ENCODE measurements at regions of chr7 and their contacts with region 1.

Region 1: DNA sequence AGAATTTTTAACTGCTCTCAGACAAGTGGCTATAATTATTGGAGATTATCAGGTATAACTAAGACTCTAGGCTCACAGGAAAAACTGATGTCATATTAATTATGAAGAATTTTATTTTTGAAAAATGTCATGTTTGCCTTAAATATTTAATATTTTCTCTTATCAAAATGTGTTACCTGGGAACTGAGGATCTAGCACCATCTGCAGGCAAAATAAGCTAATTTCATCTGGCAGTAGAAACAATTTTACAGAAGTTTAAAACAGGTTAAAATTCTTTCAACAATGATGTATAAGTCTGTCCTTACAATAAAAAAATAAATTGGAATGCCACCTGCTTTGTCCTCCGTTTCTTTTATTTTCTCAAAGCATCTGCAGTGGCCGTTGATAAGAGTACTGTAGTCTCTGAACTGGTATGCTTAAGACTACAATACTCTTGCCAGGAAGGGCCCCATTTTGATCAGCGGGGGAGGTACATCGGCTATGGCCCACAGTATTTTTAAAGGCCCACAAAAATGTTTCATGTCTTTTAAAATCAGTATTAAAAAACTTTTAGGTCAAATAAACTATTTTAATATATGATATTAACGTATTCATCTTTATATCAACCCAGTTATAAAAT is 81.3 kb downstream of the VWDE start:
- DNase-seq: no peak
- ATAC-seq: no peak
- H3K4me3 ChIP-seq: no peak overlapping the region
- H3K27ac ChIP-seq: no peak overlapping the region
- H3K4me1 ChIP-seq: no peaks in the 10 kb centered on the region
- H3K27me3 ChIP-seq: no peaks in the 10 kb centered on the region
- CTCF ChIP-seq: peak; percentile 69

Region 2: GRCh38 chr7:11420049-11420448 is 902.3 kb before region 1 on chr7:
- intact Hi-C with region 1: loop called in 1 of 2 experiments (anchors 5 kb)
- DNase-seq: no peak
- ATAC-seq: no peak
- H3K4me3 ChIP-seq: no peak overlapping the region
- H3K27ac ChIP-seq: no peak overlapping the region
- H3K4me1 ChIP-seq: no peaks in the 10 kb centered on the region
- H3K27me3 ChIP-seq: no peaks in the 10 kb centered on the region
- CTCF ChIP-seq: no peak

Region 3: DNA sequence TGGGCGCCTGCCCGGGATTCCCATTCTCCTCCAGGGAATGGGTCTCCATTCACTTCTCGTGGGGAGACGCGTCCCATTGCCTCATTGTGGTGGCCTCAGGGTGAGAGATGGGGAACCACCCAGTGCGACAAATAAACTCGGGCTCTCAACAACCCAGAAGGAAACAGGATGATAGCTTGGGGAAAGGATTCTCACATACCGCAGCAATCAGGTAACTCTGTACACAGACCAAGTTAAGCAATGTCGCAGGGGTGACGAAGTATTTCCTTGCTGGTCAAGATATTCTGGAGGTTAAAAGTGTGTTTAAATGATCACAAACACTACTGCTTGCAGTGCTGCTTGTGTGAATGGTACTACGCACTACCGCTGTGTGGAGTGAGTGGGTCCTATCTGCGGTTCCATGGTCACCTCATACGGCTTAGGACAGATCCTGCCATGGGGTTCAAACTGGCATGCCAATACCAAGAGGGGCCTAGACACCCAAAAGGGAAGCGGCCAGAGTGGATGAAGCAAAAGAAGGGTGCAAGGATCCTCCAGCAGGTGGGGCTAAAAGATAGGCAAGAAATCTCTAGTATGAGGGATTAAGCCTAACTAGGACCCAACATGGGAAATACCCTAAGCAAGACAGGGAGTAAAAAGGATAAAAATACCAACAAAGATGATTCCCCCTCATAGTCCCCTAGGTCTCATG is 255.1 kb before region 1 on chr7:
- intact Hi-C with region 1: loop called (anchors 5 kb)
- DNase-seq: no peak
- ATAC-seq: peak in 3 of 4 donors; percentile 45 to 54 (median 50)
- H3K4me3 ChIP-seq: no peak overlapping the region
- H3K27ac ChIP-seq: no peak overlapping the region
- H3K4me1 ChIP-seq: no peaks in the 10 kb centered on the region
- H3K27me3 ChIP-seq: no peaks in the 10 kb centered on the region
- CTCF ChIP-seq: peak; percentile 46

Region 4: DNA sequence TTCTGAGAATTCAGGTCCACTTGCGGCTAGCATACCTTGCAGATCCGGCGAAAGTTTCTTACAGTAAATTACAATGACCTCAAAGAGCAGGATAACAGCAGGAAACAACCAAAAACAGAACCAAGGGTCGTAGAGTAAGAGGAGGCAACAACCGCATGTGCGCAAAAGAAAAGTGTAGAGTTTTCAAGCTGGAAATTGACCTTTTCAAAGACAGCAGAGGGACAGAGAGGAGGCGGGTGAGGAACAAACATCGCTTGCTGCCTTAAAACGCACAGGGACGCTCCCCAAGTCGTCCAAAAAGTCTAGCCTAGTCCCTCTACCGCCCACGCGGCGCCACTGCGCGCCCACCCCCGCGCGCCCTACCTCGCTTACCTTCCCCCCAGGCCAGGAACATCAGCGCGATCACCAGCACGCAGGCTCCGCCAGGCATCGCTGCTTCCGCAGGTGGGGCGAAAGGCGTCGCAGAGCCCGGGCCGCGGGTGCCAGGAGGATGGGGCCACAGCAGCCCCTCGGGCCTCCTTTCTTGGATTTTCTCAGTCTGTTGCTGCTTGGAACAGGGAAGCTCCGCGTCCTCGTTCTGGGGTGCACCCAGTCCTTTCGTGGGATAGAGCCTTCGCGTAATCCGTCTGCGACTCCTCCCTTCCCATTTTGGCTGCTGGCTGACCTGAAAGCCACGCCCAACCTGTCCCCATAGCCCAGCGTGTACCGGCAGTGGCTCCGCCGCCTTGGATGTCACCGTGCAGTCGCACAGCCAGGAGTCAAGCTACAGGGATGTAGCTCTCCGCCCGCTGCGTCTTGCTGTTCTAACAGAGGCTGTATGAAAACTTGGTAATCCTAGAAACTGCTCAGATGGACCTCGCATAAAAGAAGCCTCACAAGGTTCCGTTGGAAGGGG is 81.1 kb after region 1 on chr7 and contains the start of gene VWDE:
- intact Hi-C with region 1: no loop called
- DNase-seq: peak in 1 of 2 donors; percentile 46
- ATAC-seq: no peak
- H3K4me3 ChIP-seq: peak within 1 kb of the TSS; percentile 46
- H3K27ac ChIP-seq: no peak within 1 kb of the TSS
- H3K4me1 ChIP-seq: no peaks in the 10 kb centered on the region
- H3K27me3 ChIP-seq: peaks cover 0 to 16% (median 0%) of the 10 kb centered on the region in 3 donors
- CTCF ChIP-seq: no peak
- total RNA-seq, gene VWDE: 0.05 TPM in 1 of 4 donors, not detected in the others

Measured in psoas muscle (tissue), 8 donors.